ENCODE measurements at regions of chr7 and their contacts with region 1.

Region 1: DNA sequence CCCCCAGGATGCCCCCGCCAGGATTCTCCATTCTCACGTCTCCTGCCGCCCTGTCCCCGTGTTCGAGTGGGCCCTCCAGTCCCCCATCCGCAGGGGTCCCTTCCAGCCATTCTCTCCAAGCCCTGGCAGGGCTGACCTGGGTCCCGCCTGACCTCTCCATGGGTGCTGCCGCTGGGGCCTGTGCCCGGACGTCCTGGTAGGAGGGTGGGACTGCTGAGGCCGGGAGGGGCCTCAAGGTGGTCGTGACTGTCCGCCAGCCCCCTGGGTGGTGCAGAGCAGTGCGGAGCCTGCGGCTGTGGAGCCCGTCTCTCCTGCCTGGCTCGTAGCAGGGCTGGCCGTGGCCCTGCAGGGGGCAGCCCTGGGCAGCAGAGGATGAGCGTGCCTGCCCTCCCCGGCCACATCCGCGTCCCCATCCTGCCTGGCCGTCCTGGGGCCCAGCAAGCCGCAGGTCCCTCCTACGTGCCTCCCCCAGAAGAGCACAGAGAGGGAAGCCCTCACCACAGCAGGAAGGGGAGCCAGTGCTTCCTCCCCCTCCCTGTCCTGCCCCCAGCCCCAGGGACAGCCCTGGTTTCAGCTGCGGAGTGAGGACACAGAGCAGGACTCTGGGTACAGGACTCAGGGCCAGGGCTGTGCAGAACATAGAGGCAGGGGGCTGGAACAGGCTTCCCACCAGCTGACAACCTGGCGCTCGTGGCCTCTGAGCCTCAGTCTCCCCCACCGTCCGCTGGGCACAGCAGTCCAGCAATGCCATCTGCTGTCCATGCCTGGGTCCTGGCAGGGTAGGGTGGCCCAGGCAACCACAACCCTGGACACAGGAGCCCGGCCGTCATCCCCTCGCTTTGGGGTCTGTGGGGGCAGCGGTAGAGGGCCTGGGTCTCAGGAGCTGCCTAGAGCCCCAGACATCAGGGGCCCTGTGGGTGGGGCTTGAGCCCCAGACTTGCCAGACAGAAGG is 1.5 kb upstream of the GRIFIN start:
- DNase-seq: peak; percentile 73 to 80
- ATAC-seq: peak; percentile 93 to 98 (median 96)
- H3K4me3 ChIP-seq: no peak overlapping the region
- H3K4me3 Mint-ChIP-seq: no peak overlapping the region
- H3K27ac ChIP-seq: no peak overlapping the region
- H3K27ac Mint-ChIP-seq: peak overlapping the region in 1 of 2 donors; percentile 33
- H3K4me1 ChIP-seq: peaks cover 19% of the 10 kb centered on the region
- H3K4me1 Mint-ChIP-seq: peaks cover 0 to 18% of the 10 kb centered on the region in 2 donors
- H3K27me3 ChIP-seq: no peaks in the 10 kb centered on the region
- H3K27me3 Mint-ChIP-seq: peaks cover 0 to 3% of the 10 kb centered on the region in 2 donors
- CTCF ChIP-seq: peak; percentile 80

Region 2: GRCh38 chr7:2431260-2431867 is 46.4 kb before region 1 on chr7:
- intact Hi-C with region 1: no loop called
- DNase-seq: peak; percentile 44 to 69
- ATAC-seq: peak; percentile 71 to 90 (median 77)
- H3K4me3 ChIP-seq: no peak overlapping the region
- H3K4me3 Mint-ChIP-seq: no peak overlapping the region
- H3K27ac ChIP-seq: no peak overlapping the region
- H3K27ac Mint-ChIP-seq: peak overlapping the region; percentile 47 to 51
- H3K4me1 ChIP-seq: peaks cover 24% of the 10 kb centered on the region
- H3K4me1 Mint-ChIP-seq: peaks cover 65 to 68% of the 10 kb centered on the region in 2 donors
- H3K27me3 ChIP-seq: no peaks in the 10 kb centered on the region
- H3K27me3 Mint-ChIP-seq: no peaks in the 10 kb centered on the region
- CTCF ChIP-seq: peak; percentile 62

Region 3: GRCh38 chr7:2487586-2488271 is 10.0 kb after region 1 on chr7:
- intact Hi-C with region 1: no loop called
- DNase-seq: no peak
- ATAC-seq: no peak
- H3K4me3 ChIP-seq: no peak overlapping the region
- H3K4me3 Mint-ChIP-seq: no peak overlapping the region
- H3K27ac ChIP-seq: no peak overlapping the region
- H3K27ac Mint-ChIP-seq: no peak overlapping the region
- H3K4me1 ChIP-seq: no peaks in the 10 kb centered on the region
- H3K4me1 Mint-ChIP-seq: peaks cover 0 to 10% of the 10 kb centered on the region in 2 donors
- H3K27me3 ChIP-seq: peaks cover 2% of the 10 kb centered on the region
- H3K27me3 Mint-ChIP-seq: peaks cover 0 to 14% of the 10 kb centered on the region in 2 donors
- CTCF ChIP-seq: no peak

Region 4: DNA sequence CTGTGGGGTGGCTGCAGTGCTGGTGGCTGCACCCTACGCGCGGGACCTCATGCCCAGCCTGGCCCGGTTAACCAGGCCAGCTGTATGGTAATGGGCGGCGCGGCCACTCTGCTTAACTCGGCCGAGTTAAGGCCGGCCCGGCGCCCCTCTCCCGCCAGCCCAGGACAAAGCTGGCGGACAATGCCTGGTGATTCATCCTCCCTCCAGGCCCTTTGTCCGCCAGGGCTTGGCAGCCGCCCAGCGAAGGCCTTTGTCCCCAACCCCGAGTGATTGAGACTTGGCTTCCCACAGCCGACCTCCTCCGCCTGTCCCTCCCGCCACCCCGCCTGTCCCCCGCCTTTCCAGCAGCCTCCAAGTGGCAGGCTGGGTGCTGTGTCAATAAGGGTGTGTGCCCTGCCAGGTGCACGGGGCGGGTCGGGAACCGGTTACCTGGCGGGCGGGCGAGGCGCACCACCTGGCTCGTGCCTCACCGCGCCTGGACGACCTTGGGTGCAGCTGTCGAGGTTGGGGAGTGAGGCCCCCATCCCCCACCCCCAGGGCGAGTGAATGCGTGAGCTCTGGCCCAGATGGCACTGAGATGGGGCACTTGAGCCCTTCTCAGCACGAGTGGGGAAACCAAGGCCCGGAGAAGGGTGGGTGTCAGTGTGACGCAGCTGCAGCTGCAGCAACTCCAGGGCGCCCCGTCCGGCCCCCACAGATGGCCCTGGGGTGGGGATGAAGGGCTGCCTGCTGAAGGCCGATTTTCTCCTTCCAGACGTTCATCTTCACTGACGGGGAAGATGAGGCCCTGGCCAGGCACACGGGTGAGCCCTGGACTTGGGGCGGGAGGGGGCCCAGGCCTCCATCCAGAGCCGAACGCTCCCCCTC is 46.5 kb after region 1 on chr7:
- intact Hi-C with region 1: loop called (anchors 5 kb)
- DNase-seq: peak in 1 of 2 donors; percentile 34
- ATAC-seq: no peak
- H3K4me3 ChIP-seq: no peak overlapping the region
- H3K4me3 Mint-ChIP-seq: peak overlapping the region; percentile 92
- H3K27ac ChIP-seq: peak overlapping the region; percentile 41
- H3K27ac Mint-ChIP-seq: peak overlapping the region; percentile 94 to 97
- H3K4me1 ChIP-seq: peaks cover 80% of the 10 kb centered on the region
- H3K4me1 Mint-ChIP-seq: peaks cover 36 to 52% of the 10 kb centered on the region in 2 donors
- H3K27me3 ChIP-seq: no peaks in the 10 kb centered on the region
- H3K27me3 Mint-ChIP-seq: no peaks in the 10 kb centered on the region
- CTCF ChIP-seq: no peak

Region 5: GRCh38 chr7:2680792-2681490 is 203.2 kb after region 1 on chr7:
- intact Hi-C with region 1: loop called (anchors 5 kb)
- DNase-seq: peak; percentile 53 to 71
- ATAC-seq: peak; percentile 56 to 70 (median 67)
- H3K4me3 ChIP-seq: no peak overlapping the region
- H3K4me3 Mint-ChIP-seq: no peak overlapping the region
- H3K27ac ChIP-seq: no peak overlapping the region
- H3K27ac Mint-ChIP-seq: no peak overlapping the region
- H3K4me1 ChIP-seq: no peaks in the 10 kb centered on the region
- H3K4me1 Mint-ChIP-seq: peaks cover 0 to 4% of the 10 kb centered on the region in 2 donors
- H3K27me3 ChIP-seq: no peaks in the 10 kb centered on the region
- H3K27me3 Mint-ChIP-seq: peaks cover 11 to 15% of the 10 kb centered on the region in 2 donors
- CTCF ChIP-seq: peak; percentile 62

Region 6: GRCh38 chr7:2709553-2710285 is 232.0 kb after region 1 on chr7:
- intact Hi-C with region 1: loop called (anchors 1 kb)
- DNase-seq: peak; percentile 71 to 89
- ATAC-seq: peak; percentile 79 to 87 (median 81)
- H3K4me3 ChIP-seq: peak overlapping the region; percentile 15
- H3K4me3 Mint-ChIP-seq: peak overlapping the region; percentile 45
- H3K27ac ChIP-seq: peak overlapping the region; percentile 54
- H3K27ac Mint-ChIP-seq: no peak overlapping the region
- H3K4me1 ChIP-seq: peaks cover 36% of the 10 kb centered on the region
- H3K4me1 Mint-ChIP-seq: peaks cover 22 to 25% of the 10 kb centered on the region in 2 donors
- H3K27me3 ChIP-seq: peaks cover 30% of the 10 kb centered on the region
- H3K27me3 Mint-ChIP-seq: peaks cover 51 to 73% of the 10 kb centered on the region in 2 donors
- CTCF ChIP-seq: peak; percentile 92

Measured in natural killer cell (primary cell).